Activated CD8-positive, alpha-beta T cell treated with anti-CD3 and anti-CD28 coated beads for 36 hours (primary cell): ENCODE measurements at regions of chr2 and their contacts with region 1.

Region 1: GRCh38 chr2:23926750-23927571 is at the start of gene ATAD2B:
- DNase-seq: peak; percentile 94
- ATAC-seq: peak; percentile 88
- H3K4me3 Mint-ChIP-seq: peak within 1 kb of the TSS; percentile 95
- H3K27ac Mint-ChIP-seq: peak within 1 kb of the TSS; percentile 99
- H3K4me1 Mint-ChIP-seq: peaks cover 42% of the 10 kb centered on the region
- H3K27me3 Mint-ChIP-seq: no peaks in the 10 kb centered on the region
- CTCF ChIP-seq: peak; percentile 67
- total RNA-seq, gene ATAD2B: 12.5 to 13.2 TPM

Region 2: DNA sequence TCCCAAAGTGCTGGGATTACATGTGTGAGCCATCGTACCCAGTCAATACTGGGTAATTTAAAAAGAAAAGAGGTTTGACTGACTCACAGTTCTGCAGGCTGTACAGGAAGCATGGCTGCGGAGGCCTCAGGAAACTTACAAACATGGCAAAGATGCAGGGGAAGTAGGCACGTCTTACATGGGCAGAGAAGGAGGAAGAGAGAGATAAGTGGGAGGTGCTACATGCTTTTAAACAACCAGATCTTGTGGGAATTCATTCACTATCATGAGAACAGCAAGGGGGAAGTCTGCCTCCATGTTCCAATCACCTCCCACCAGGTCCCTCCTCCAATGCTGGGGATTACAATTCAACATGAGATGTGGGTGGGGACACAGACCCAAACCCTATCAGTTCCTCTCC is 192.5 kb before region 1 on chr2:
- CTCF ChIA-PET with region 1: no interaction called
- POLR2A ChIA-PET with region 1: no interaction called
- intact Hi-C with region 1: no loop called
- DNase-seq: no peak
- ATAC-seq: no peak
- H3K4me3 Mint-ChIP-seq: no peak overlapping the region
- H3K27ac Mint-ChIP-seq: no peak overlapping the region
- H3K4me1 Mint-ChIP-seq: no peaks in the 10 kb centered on the region
- H3K27me3 Mint-ChIP-seq: no peaks in the 10 kb centered on the region
- CTCF ChIP-seq: no peak

Region 3: DNA sequence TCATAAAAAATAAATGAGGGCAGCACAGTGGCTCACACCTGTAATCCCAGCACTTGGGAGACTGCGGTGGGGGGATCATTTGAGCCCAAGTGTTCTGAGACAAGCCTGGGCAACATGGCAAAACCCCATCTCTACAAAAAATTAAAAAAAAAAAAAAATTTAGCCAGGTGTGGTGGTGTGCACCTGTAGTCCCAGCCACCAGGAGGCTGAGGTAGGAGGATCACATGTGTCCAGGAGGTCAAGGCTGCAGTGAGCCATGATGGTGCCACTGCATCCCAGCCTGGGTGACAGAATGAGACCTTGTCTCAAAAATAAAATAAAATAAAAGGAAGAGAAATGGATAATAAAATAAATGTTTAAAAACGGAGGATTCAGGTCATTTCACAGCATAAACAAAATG is 113.5 kb before region 1 on chr2:
- CTCF ChIA-PET with region 1: no interaction called
- POLR2A ChIA-PET with region 1: no interaction called
- intact Hi-C with region 1: no loop called
- DNase-seq: no peak
- ATAC-seq: no peak
- H3K4me3 Mint-ChIP-seq: no peak overlapping the region
- H3K27ac Mint-ChIP-seq: no peak overlapping the region
- H3K4me1 Mint-ChIP-seq: no peaks in the 10 kb centered on the region
- H3K27me3 Mint-ChIP-seq: no peaks in the 10 kb centered on the region
- CTCF ChIP-seq: no peak

Region 4: DNA sequence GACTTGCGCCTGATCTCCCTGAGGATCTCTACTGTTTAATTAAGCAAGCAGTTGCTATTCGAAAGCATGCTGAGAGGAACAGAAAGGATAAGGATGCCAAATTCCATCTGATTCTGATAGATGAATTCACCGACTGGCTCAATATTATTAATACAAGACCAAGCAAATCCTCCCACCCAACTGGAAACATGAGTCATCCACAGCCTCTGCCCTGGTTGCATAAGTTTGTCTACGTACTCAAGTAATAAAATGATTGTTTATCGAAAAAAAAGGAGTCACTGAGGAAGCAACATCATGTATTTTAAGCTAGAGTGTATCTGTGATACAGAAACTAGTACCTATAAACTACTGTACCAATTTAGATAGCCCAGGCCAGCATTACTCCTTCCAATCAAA is 26.0 kb before region 1 on chr2:
- CTCF ChIA-PET with region 1: interaction called, 4 read pairs
- POLR2A ChIA-PET with region 1: interaction called, 23 read pairs
- intact Hi-C with region 1: no loop called
- DNase-seq: no peak
- ATAC-seq: no peak
- H3K4me3 Mint-ChIP-seq: no peak overlapping the region
- H3K27ac Mint-ChIP-seq: no peak overlapping the region
- H3K4me1 Mint-ChIP-seq: peaks cover 51% of the 10 kb centered on the region
- H3K27me3 Mint-ChIP-seq: no peaks in the 10 kb centered on the region
- CTCF ChIP-seq: no peak

Region 5: GRCh38 chr2:23947350-23947749 is 20.4 kb after region 1 on chr2:
- CTCF ChIA-PET with region 1: interaction called, 74 read pairs
- POLR2A ChIA-PET with region 1: interaction called, 14 read pairs
- intact Hi-C with region 1: no loop called
- DNase-seq: no peak
- ATAC-seq: no peak
- H3K4me3 Mint-ChIP-seq: no peak overlapping the region
- H3K27ac Mint-ChIP-seq: no peak overlapping the region
- H3K4me1 Mint-ChIP-seq: peaks cover 14% of the 10 kb centered on the region
- H3K27me3 Mint-ChIP-seq: no peaks in the 10 kb centered on the region
- CTCF ChIP-seq: no peak

Region 6: DNA sequence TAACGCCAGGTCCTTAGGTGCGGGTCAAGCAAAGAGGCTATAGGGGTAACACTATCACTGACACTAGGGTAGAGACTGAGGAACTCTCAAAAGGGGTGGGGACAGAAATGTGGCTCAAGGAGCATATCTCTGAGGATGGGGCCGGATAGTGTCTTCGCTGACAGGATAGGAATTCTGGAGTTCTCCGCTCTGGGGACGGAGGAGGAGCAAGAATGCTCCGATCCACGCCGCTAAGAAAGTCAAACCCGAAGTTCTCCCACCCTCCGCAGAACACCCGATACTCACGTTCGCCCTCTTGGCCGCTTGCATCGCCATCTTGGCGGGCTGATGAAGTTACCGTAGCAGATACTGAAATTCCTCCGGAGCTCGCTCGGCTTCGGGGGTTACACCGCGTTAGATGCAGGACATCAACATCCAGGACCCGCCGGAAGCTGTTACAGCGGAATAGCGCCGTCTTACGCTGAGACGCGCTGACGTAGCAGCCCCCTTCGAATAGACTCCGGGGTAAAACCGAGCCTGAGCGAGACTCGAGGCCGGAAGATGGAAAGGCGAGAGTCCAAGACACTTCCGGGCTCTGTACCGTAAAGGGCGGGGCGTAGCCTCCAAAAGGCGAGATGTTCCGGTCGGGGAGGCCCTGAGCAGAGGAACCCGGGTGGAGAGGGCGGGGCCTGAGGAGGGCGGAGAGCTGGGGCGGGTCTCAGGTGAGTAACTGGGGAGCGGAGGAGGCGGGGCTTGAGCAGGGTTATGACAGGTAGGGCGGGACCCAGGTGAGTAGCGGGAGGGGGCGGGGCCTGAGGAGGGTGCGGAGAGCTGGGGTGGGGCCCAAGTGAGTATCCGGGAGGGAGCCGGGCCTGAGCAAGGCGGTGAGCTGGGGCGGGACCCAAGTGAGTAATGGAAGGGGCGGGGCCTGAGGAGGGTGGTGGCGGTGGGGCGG is 149.2 kb after region 1 on chr2 and contains the start of gene SF3B6:
- CTCF ChIA-PET with region 1: interaction called, 24 read pairs
- POLR2A ChIA-PET with region 1: interaction called, 18 read pairs
- intact Hi-C with region 1: loop called (anchors 5 kb)
- DNase-seq: peak; percentile 100
- ATAC-seq: peak; percentile 92
- H3K4me3 Mint-ChIP-seq: peak within 1 kb of the TSS; percentile 93
- H3K27ac Mint-ChIP-seq: peak within 1 kb of the TSS; percentile 98
- H3K4me1 Mint-ChIP-seq: peaks cover 36% of the 10 kb centered on the region
- H3K27me3 Mint-ChIP-seq: no peaks in the 10 kb centered on the region
- CTCF ChIP-seq: no peak
- total RNA-seq, gene SF3B6: 141 to 144 TPM